Transverse colon (tissue), 4 donors: ENCODE measurements at regions of chr4 and their contacts with region 1.

Region 1: GRCh38 chr4:123209436-123209835 is 187.2 kb upstream of the SPRY1 start:
- DNase-seq: no peak
- H3K4me3 ChIP-seq: no peak overlapping the region
- H3K27ac ChIP-seq: no peak overlapping the region
- H3K4me1 ChIP-seq: no peaks in the 10 kb centered on the region
- H3K27me3 ChIP-seq: no peaks in the 10 kb centered on the region
- CTCF ChIP-seq: no peak
- EP300 ChIP-seq: no peak
- POLR2A ChIP-seq: no peak

Region 2: GRCh38 chr4:123159479-123159878 is 50.0 kb before region 1 on chr4:
- in situ Hi-C with region 1: no loop called
- intact Hi-C with region 1: no loop called
- DNase-seq: no peak
- H3K4me3 ChIP-seq: no peak overlapping the region
- H3K27ac ChIP-seq: no peak overlapping the region
- H3K4me1 ChIP-seq: no peaks in the 10 kb centered on the region
- H3K27me3 ChIP-seq: no peaks in the 10 kb centered on the region
- CTCF ChIP-seq: no peak
- EP300 ChIP-seq: no peak
- POLR2A ChIP-seq: no peak

Region 3: GRCh38 chr4:123170843-123171242 is 38.6 kb before region 1 on chr4:
- in situ Hi-C with region 1: no loop called
- intact Hi-C with region 1: loop called (anchors 1 kb)
- DNase-seq: no peak
- H3K4me3 ChIP-seq: no peak overlapping the region
- H3K27ac ChIP-seq: no peak overlapping the region
- H3K4me1 ChIP-seq: no peaks in the 10 kb centered on the region
- H3K27me3 ChIP-seq: no peaks in the 10 kb centered on the region
- CTCF ChIP-seq: no peak
- EP300 ChIP-seq: no peak
- POLR2A ChIP-seq: no peak